ENCODE measurements at regions of chr17 and their contacts with region 1.

Region 1: DNA sequence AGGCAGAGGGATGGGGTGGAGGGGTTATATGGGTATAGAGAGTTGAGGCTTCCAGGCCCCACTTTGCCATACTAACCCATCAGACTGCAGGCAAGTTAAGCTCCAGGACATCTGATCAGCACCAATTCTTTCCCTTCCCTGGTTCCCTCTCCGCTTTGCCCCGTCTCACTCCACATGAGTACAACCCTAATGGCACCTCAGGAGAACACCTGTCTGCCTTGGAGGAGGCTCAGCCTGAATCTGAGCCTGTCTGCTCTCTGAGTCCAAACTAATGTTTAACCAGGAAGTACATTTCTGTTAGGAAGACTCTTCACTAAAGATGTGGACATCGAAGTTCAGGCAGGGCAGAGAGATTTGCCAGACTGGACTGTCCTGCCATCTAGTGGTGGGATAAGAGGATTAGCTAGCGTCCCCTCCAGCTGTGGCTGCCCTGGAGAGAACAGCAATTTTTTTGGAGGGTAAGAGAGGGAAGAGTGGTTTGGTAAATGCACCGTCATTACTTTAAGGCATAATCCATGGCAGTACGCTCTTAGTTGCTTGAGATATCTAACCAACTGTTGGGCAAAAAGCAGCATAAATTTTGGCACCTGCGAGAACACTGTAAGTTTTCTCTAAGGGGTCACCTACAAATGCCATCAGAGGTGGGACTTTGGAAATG is 29.2 kb upstream of the LRRC75A start:
- DNase-seq: peak; percentile 79 to 92 (median 85)
- H3K4me3 ChIP-seq: no peak overlapping the region
- H3K27ac ChIP-seq: peak overlapping the region in 1 of 5 donors; percentile 67
- H3K4me1 ChIP-seq: peaks cover 5 to 11% of the 10 kb centered on the region in 2 donors
- H3K27me3 ChIP-seq: no peaks in the 10 kb centered on the region
- CTCF ChIP-seq: peak; percentile 90 to 98 (median 96)
- POLR2A ChIP-seq: no peak

Region 2: DNA sequence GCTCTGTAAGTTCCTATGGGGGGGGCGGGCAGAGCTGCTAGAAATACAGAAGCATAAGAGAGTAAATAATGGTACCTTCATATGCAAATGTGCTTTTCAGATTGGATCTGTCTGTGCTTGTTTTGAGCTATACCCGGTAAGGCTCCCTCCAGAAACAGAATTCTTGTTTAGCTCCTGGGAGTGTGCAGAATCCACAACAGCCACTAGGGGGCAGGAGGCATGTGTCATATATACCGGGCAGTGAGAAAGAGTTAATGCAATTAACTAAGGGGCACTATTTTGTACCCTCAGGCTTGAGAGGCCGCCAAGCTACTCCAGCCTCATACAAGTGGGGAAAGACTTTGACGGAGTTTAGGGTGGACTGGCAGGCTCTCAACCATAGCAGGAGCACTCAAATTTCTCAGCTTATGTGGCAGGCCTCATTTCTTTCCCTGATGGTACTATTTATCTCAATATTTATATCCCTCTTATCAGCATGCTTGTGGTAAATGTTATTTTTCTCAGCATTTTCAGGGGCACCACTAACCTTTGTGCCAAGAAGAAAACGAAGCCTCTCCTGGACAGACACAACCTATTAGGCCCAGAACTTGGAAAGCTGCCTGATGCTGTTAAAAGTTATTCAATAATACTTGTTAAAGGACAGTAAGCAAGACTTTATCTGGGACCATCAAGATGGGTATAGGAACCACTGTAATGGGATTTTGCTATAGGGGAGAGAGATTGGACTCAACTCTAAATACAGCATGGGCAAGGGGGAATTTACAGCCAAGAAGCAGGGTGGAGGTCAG is 157.3 kb before region 1 on chr17:
- intact Hi-C with region 1: loop called in 1 of 2 experiments (anchors 10 kb)
- DNase-seq: peak; percentile 58 to 90 (median 80)
- H3K4me3 ChIP-seq: no peak overlapping the region
- H3K27ac ChIP-seq: peak overlapping the region in 2 of 5 donors; percentile 33 to 59
- H3K4me1 ChIP-seq: peaks cover 0 to 8% of the 10 kb centered on the region in 2 donors
- H3K27me3 ChIP-seq: no peaks in the 10 kb centered on the region
- CTCF ChIP-seq: peak; percentile 83 to 96 (median 89)
- POLR2A ChIP-seq: no peak

Region 3: DNA sequence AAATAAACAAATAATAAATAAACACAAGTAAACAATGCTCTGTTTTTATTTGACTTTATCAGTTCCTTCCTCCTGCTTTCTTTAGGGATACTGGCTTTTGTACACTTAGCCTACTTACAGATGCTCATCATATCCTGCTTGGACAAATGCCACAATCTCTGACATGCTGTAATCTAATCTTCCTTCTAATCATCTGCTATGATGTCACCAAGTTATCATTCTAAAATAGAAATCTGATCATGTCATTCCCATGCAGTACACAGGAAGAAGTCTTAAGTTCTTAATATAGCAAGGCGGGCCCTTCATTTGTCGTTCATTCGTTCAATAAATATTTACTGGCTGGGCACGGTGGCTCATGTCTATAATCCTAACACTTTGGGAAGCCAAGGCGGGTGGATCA is 149.5 kb before region 1 on chr17:
- intact Hi-C with region 1: loop called (anchors 10 kb)
- DNase-seq: peak in 1 of 7 donors; percentile 37
- H3K4me3 ChIP-seq: no peak overlapping the region
- H3K27ac ChIP-seq: peak overlapping the region in 1 of 5 donors; percentile 20
- H3K4me1 ChIP-seq: no peaks in the 10 kb centered on the region
- H3K27me3 ChIP-seq: no peaks in the 10 kb centered on the region
- CTCF ChIP-seq: no peak
- POLR2A ChIP-seq: no peak

Region 4: GRCh38 chr17:16442594-16443510 is 78.3 kb before region 1 on chr17:
- intact Hi-C with region 1: no loop called
- DNase-seq: no peak
- H3K4me3 ChIP-seq: no peak overlapping the region
- H3K27ac ChIP-seq: peak overlapping the region in 2 of 5 donors; percentile 73 to 74
- H3K4me1 ChIP-seq: peaks cover 18 to 69% of the 10 kb centered on the region in 2 donors
- H3K27me3 ChIP-seq: no peaks in the 10 kb centered on the region
- CTCF ChIP-seq: no peak
- POLR2A ChIP-seq: no peak

Region 5: GRCh38 chr17:16453493-16453851 is 67.7 kb before region 1 on chr17:
- intact Hi-C with region 1: loop called (anchors 2 to 5 kb)
- DNase-seq: no peak
- H3K4me3 ChIP-seq: no peak overlapping the region
- H3K27ac ChIP-seq: peak overlapping the region in 3 of 5 donors; percentile 38 to 43 (median 38)
- H3K4me1 ChIP-seq: peaks cover 0 to 10% of the 10 kb centered on the region in 2 donors
- H3K27me3 ChIP-seq: no peaks in the 10 kb centered on the region
- CTCF ChIP-seq: no peak
- POLR2A ChIP-seq: no peak

Region 6: DNA sequence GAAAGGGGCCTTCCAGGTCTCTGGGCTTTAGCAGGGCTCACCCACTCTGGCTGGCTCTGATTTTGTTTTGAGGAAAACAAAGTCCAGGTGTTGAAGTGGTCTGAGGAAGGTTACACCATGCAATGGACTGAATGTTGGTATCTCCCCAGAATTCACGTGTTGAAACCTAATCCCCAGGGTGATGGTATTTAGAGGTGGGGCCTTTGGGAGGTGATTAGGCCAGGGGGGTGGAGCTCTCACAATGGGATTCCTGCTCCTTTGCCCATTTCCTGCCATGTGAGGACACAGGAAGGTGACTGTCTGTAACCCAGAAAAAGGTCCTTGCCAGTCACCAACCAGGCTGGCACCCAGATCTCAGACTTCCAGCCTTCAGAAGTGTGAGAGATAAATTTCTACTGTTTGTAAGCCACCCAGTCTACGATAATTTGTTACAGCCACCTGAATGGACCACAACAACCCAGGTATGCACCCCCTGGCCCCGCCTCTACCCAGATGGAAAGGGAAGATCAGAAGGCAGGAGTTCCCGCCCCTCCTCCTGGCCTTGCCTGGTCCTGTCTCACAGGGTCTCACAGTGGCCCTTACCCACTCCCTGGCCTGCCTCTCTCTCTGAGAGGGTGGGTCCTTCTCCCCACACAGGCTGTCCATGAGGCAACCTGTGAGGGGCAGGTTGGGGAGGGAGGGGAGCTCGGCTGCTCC is 61.2 kb before region 1 on chr17:
- intact Hi-C with region 1: loop called in 1 of 2 experiments (anchors 2 kb)
- DNase-seq: no peak
- H3K4me3 ChIP-seq: no peak overlapping the region
- H3K27ac ChIP-seq: peak overlapping the region in 2 of 5 donors; percentile 13 to 66
- H3K4me1 ChIP-seq: peaks cover 15 to 35% of the 10 kb centered on the region in 2 donors
- H3K27me3 ChIP-seq: no peaks in the 10 kb centered on the region
- CTCF ChIP-seq: no peak
- POLR2A ChIP-seq: no peak

Region 7: DNA sequence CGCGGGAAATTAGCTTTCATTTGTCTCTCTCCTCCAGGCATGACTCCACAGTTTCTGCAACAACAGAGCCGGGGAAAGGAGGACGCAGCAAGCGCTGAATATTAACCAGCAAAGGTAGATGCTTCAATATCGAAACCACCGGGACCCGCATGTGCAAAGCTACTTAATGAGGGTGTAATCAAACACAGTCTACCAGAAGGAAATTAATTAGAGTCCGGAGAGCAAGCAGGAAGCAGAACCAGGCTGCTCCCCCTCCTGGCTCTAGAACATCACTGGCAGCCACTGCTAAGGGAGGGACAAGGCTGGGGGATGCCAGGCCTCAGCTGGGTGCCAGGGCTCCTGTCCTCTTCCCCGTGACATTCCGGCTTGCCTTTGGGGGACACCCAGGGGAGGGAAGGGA is 50.9 kb before region 1 on chr17:
- intact Hi-C with region 1: no loop called
- DNase-seq: no peak
- H3K4me3 ChIP-seq: no peak overlapping the region
- H3K27ac ChIP-seq: peak overlapping the region in 2 of 5 donors; percentile 60 to 73
- H3K4me1 ChIP-seq: peaks cover 7 to 71% of the 10 kb centered on the region in 2 donors
- H3K27me3 ChIP-seq: no peaks in the 10 kb centered on the region
- CTCF ChIP-seq: peak in 1 of 6 experiments; percentile 5
- POLR2A ChIP-seq: no peak

Measured in adrenal gland (tissue), 19 donors.